PC-3 (cell line): ENCODE measurements at regions of chr12 and their contacts with region 1.

Region 1: GRCh38 chr12:85468356-85469157 is 188.5 kb downstream of the ALX1 start:
- DNase-seq: peak; percentile 93
- ATAC-seq: peak; percentile 53
- H3K4me3 ChIP-seq: peak overlapping the region; percentile 57
- H3K27ac ChIP-seq: peak overlapping the region; percentile 73
- H3K4me1 ChIP-seq: peaks cover 54% of the 10 kb centered on the region
- H3K27me3 ChIP-seq: no peaks in the 10 kb centered on the region
- CTCF ChIP-seq: peak; percentile 87

Region 2: DNA sequence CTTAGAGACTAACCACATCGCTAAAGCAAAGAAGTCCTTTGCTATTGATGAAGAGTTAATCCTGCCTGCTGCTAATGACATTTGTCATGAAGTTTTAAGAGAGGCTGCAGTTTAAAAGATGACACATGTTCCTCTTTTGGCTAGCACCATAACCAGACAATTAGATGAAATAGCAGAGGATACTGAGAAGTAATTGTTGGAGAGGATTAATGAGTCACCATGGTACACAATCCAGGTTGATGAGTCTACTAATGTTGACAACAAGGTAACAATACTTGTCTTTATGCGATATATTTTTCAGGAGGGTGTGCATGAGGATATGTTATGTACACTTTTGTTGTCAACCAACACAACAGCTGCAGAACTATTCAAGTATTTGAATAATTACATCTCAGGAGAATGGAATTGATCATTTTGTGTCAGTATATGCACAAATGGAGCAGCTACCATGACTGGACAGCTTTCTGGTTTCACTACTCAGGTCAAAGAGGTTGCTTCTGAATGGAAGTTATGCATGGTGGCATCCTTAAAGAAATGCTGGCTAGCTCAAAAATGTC is 375.7 kb before region 1 on chr12:
- CTCF ChIA-PET with region 1: no interaction called
- POLR2A ChIA-PET with region 1: no interaction called
- intact Hi-C with region 1: loop called (anchors 5 kb)
- DNase-seq: peak; percentile 95
- ATAC-seq: peak; percentile 86
- H3K4me3 ChIP-seq: peak overlapping the region; percentile 11; the same call in 1 of the 2 replicates
- H3K27ac ChIP-seq: peak overlapping the region; percentile 94
- H3K4me1 ChIP-seq: peaks cover 26% of the 10 kb centered on the region
- H3K27me3 ChIP-seq: no peaks in the 10 kb centered on the region
- CTCF ChIP-seq: no peak

Region 3: DNA sequence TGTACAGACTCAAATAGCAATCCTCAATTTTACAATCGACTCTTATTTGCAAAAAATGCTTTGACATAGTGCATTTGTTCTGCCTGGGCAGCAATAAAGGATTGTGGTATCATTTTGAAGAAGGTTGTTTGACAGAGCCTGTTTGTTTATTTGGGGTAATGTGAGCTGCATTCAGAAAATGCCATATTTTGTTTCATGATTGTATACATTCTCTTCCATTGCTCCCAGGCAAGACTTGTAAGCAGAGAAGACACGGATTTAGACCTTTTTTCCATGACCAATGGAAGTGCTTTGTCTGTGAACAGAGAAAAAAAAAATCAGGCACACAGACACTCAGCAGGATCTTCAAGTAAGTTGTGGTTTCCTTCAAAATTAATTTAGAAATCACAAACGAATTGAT is 224.0 kb before region 1 on chr12:
- CTCF ChIA-PET with region 1: no interaction called
- POLR2A ChIA-PET with region 1: no interaction called
- intact Hi-C with region 1: no loop called
- DNase-seq: no peak
- ATAC-seq: no peak
- H3K4me3 ChIP-seq: no peak overlapping the region
- H3K27ac ChIP-seq: no peak overlapping the region
- H3K4me1 ChIP-seq: no peaks in the 10 kb centered on the region
- H3K27me3 ChIP-seq: no peaks in the 10 kb centered on the region
- CTCF ChIP-seq: no peak

Region 4: GRCh38 chr12:85575120-85576096 is 106.9 kb after region 1 on chr12:
- CTCF ChIA-PET with region 1: no interaction called
- POLR2A ChIA-PET with region 1: no interaction called
- intact Hi-C with region 1: loop called (anchors 2 kb)
- DNase-seq: peak; percentile 81
- ATAC-seq: peak; percentile 95
- H3K4me3 ChIP-seq: no peak overlapping the region
- H3K27ac ChIP-seq: no peak overlapping the region
- H3K4me1 ChIP-seq: peaks cover 3% of the 10 kb centered on the region; the same call in 1 of the 2 replicates
- H3K27me3 ChIP-seq: no peaks in the 10 kb centered on the region
- CTCF ChIP-seq: peak; percentile 92

Region 5: GRCh38 chr12:85866986-85867776 is 398.6 kb after region 1 on chr12:
- CTCF ChIA-PET with region 1: interaction called, 16 read pairs
- POLR2A ChIA-PET with region 1: no interaction called
- intact Hi-C with region 1: loop called (anchors 1 kb)
- DNase-seq: peak; percentile 72
- ATAC-seq: peak; percentile 79
- H3K4me3 ChIP-seq: no peak overlapping the region
- H3K27ac ChIP-seq: no peak overlapping the region
- H3K4me1 ChIP-seq: no peaks in the 10 kb centered on the region
- H3K27me3 ChIP-seq: no peaks in the 10 kb centered on the region
- CTCF ChIP-seq: peak; percentile 90

Region 6: DNA sequence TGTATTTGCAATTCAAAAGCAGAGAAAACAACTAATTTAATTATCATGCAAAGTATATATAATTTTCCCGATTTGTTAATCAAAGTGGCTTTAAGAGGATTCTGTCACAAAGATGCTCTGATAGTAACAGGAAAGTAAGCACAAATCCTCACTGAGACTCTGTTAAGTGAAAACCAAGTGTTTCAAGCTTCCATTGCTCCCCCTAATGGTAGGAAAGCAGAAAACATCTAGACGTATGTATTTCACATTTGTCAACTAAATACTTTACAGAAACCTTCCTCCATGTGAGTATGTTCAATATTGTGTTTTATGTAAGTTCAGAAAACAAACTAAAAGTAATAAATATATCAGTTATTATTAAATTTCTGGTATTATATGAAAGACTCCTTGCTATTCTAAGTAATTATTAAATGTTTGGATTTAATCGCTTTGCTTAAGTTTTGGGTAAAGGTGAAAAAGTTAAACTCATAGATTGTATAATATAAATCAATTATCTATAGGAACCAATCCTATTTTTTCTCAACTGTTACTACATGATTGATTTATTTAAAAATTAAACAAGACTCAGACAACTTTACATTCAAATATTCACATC is 404.0 kb after region 1 on chr12:
- CTCF ChIA-PET with region 1: interaction called, 16 read pairs
- POLR2A ChIA-PET with region 1: no interaction called
- intact Hi-C with region 1: loop called (anchors 1 kb)
- DNase-seq: peak; percentile 81
- ATAC-seq: peak; percentile 63
- H3K4me3 ChIP-seq: no peak overlapping the region
- H3K27ac ChIP-seq: no peak overlapping the region
- H3K4me1 ChIP-seq: no peaks in the 10 kb centered on the region
- H3K27me3 ChIP-seq: no peaks in the 10 kb centered on the region
- CTCF ChIP-seq: peak; percentile 79

Region 7: GRCh38 chr12:85920324-85920947 is 451.9 kb after region 1 on chr12:
- CTCF ChIA-PET with region 1: interaction called, 4 read pairs
- POLR2A ChIA-PET with region 1: no interaction called
- intact Hi-C with region 1: loop called (anchors 1 kb)
- DNase-seq: peak; percentile 78
- ATAC-seq: peak; percentile 55; the same call in 1 of the 2 replicates
- H3K4me3 ChIP-seq: no peak overlapping the region
- H3K27ac ChIP-seq: no peak overlapping the region
- H3K4me1 ChIP-seq: no peaks in the 10 kb centered on the region
- H3K27me3 ChIP-seq: no peaks in the 10 kb centered on the region
- CTCF ChIP-seq: peak; percentile 75